ENCODE measurements at regions of chr4 and their contacts with region 1.

Region 1: DNA sequence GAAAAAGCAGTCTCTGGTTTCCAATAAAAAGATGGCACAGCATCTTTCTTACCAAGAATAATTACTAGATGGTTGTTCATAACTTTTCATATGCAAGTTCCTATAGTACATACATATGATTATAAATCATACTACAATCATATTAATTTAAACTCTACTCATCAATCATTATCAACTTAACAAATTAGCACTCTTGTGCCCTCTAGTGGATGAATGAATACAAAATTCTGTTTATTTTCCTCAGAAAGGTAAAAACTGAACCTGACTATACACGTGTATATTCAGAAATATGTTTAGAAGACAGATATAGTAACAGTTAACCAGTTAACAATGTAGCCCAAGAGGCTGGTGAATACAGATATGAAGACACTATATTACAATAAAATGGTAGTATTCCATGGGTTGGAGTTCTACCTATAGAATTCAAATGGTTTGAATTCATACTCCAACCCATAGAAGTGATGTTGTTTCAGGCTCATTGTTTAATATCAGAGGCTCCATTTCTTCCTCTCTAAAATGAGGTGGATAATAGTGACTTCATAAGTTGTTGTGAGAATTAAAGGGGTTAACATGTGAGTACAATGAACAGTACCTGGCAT is 100.0 kb downstream of the ADAMTS3 start:
- DNase-seq: no peak
- ATAC-seq: no peak
- H3K4me3 ChIP-seq: no peak overlapping the region
- H3K27ac ChIP-seq: no peak overlapping the region
- H3K4me1 ChIP-seq: no peaks in the 10 kb centered on the region
- H3K27me3 ChIP-seq: no peaks in the 10 kb centered on the region
- CTCF ChIP-seq: peak in 8 of 9 donors; percentile 28 to 76 (median 68)

Region 2: GRCh38 chr4:72295966-72296557 is 172.9 kb before region 1 on chr4:
- intact Hi-C with region 1: loop called in 4 of 10 experiments (anchors 2 to 10 kb)
- DNase-seq: no peak
- ATAC-seq: peak in 7 of 8 donors; percentile 56 to 77 (median 70)
- H3K4me3 ChIP-seq: no peak overlapping the region
- H3K27ac ChIP-seq: no peak overlapping the region
- H3K4me1 ChIP-seq: no peaks in the 10 kb centered on the region
- H3K27me3 ChIP-seq: no peaks in the 10 kb centered on the region
- CTCF ChIP-seq: peak; percentile 30 to 82 (median 67)

Region 3: DNA sequence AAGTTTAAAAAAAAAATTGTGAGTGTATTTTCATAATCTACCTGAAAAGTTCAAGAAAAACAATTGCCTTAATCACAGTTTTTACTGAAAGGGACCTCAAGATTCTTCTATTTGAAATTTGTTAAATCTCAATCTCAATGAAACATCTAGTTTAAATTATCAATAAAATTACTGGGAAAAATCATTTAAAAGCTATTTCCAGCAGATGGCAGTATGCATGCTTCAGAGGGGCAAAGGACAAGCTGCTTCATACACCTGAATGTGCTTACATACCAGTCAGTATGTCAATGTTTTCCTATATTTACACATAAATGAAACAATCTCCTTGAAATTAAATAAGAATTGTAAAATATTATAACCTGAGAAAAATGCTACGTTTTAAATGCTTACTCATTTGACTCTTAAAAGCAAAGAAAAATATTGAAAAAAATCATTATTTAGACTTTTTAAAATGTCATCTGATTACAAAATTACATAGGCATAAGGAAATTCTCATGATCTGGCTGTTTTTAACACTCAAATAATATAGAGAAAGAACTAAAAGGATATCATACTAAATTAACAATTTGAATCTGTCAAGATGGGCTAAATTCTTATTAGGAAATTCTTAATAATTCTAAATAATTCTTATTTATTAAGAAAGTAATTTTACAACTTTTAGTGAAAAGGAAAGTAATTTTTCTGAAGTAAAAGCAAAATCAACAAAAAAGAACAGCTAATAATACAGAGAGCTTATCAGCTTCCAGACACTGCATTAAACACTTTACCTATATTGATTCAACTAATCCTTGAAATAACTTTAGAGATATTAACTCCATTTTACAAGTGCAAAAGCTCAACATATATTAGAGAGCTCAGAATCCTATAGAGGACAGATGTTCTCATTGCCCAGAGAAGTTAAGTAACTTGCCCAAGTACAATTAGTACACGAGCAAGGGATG is 142.0 kb before region 1 on chr4:
- intact Hi-C with region 1: loop called (anchors 1 to 10 kb)
- DNase-seq: no peak
- ATAC-seq: no peak
- H3K4me3 ChIP-seq: no peak overlapping the region
- H3K27ac ChIP-seq: no peak overlapping the region
- H3K4me1 ChIP-seq: no peaks in the 10 kb centered on the region
- H3K27me3 ChIP-seq: no peaks in the 10 kb centered on the region
- CTCF ChIP-seq: peak; percentile 31 to 73 (median 63)

Region 4: DNA sequence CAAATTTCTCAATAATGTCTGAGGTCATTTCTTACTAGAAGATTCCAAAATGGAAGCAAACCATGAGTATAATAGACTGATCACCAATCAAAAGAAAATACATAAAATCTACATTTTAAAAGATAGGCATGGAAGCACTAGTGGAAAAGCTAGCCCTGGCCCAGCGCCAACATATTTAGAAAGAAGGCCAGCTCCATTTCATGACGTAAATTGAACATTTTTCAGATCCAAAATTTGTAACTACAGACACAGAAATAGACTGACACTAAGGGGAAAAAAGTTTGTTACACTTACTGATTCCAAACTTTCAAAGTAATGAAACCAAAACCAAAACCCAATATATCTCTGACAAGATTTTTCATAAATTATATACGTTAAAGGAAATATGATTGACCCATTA is 17.7 kb before region 1 on chr4:
- intact Hi-C with region 1: loop called in 1 of 10 experiments (anchors 1 kb)
- DNase-seq: peak; percentile 13 to 14
- ATAC-seq: no peak
- H3K4me3 ChIP-seq: no peak overlapping the region
- H3K27ac ChIP-seq: no peak overlapping the region
- H3K4me1 ChIP-seq: no peaks in the 10 kb centered on the region
- H3K27me3 ChIP-seq: no peaks in the 10 kb centered on the region
- CTCF ChIP-seq: no peak